ENCODE measurements at regions of chr1 and their contacts with region 1.

Region 1: GRCh38 chr1:21189906-21190500 is 13.3 kb upstream of the EIF4G3 start:
- H3K4me3 Mint-ChIP-seq: no peak overlapping the region
- H3K27ac Mint-ChIP-seq: peak overlapping the region; percentile 72
- H3K4me1 Mint-ChIP-seq: peaks cover 19% of the 10 kb centered on the region
- H3K27me3 Mint-ChIP-seq: peaks cover 15% of the 10 kb centered on the region

Region 2: DNA sequence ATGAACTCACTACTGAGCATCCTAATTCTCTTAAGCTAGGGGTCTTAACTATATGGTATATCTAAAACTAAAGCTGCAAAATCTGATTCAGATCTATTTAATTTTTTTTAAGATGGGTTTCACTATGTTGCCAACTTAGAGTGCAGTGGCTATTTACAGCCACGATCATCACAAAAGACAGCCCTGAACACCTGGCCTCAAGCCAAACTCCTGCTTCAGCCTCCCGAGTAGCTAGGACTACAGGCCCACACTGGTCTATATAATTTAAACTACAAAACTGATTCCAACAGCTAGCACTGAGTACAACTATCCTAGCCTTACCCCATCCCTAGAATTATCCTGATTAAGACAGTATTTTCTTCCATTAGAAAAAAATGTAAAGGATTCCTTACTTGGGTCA is 50.4 kb before region 1 on chr1:
- intact Hi-C with region 1: loop called (anchors 10 kb)
- H3K4me3 Mint-ChIP-seq: no peak overlapping the region
- H3K27ac Mint-ChIP-seq: no peak overlapping the region
- H3K4me1 Mint-ChIP-seq: peaks cover 11% of the 10 kb centered on the region
- H3K27me3 Mint-ChIP-seq: no peaks in the 10 kb centered on the region

Region 3: DNA sequence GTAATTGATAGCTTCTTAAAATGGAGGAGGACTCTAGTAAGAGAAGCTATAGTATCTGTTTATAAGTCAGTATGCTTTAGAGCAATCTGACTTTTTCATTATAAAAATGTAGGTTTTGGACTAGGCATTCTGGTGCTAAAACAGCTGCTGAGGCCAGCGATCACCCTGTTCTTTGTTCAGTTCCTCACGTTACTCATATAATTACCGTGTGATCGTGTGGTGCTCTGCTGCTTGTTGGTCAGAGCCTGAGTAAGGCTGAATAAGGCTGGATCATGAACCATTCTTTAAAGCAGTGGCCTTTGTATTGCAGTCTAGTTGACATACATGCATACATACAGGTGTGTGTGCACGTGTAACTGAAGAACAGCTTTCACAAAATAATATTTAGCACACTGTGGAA is 887.7 kb after region 1 on chr1:
- intact Hi-C with region 1: no loop called
- H3K4me3 Mint-ChIP-seq: no peak overlapping the region
- H3K27ac Mint-ChIP-seq: no peak overlapping the region
- H3K4me1 Mint-ChIP-seq: peaks cover 69% of the 10 kb centered on the region
- H3K27me3 Mint-ChIP-seq: no peaks in the 10 kb centered on the region